ENCODE measurements at regions of chr17 and their contacts with region 1.

Region 1: GRCh38 chr17:28849281-28849680 is 5.5 kb upstream of the ERAL1 start:
- DNase-seq: peak; percentile 60
- H3K4me3 Mint-ChIP-seq: no peak overlapping the region
- H3K27ac Mint-ChIP-seq: no peak overlapping the region
- H3K4me1 Mint-ChIP-seq: no peaks in the 10 kb centered on the region
- H3K27me3 Mint-ChIP-seq: no peaks in the 10 kb centered on the region

Region 2: DNA sequence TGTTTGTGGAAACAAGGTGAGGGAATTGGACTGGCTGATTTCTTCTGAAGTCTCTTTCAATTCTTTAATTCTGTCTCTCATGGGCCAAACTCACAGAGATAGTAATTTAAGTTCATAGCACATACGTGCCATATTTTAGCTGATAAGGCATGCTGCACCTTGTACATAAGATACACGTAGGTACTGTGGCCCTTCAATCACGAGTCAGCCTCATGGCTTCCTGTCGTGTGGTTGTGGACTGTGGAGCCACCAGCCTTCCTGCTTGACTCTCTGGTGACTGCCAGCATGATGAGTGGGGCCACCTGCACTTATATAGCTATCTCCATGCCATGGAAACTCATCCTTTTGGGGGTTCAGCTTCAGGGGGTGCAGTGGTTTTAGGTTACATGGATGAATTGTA is 1368.0 kb before region 1 on chr17:
- CTCF ChIA-PET with region 1: no interaction called
- intact Hi-C with region 1: no loop called
- DNase-seq: peak; percentile 73
- H3K4me3 Mint-ChIP-seq: peak overlapping the region; percentile 32
- H3K27ac Mint-ChIP-seq: peak overlapping the region; percentile 28
- H3K4me1 Mint-ChIP-seq: peaks cover 66% of the 10 kb centered on the region
- H3K27me3 Mint-ChIP-seq: no peaks in the 10 kb centered on the region

Region 3: DNA sequence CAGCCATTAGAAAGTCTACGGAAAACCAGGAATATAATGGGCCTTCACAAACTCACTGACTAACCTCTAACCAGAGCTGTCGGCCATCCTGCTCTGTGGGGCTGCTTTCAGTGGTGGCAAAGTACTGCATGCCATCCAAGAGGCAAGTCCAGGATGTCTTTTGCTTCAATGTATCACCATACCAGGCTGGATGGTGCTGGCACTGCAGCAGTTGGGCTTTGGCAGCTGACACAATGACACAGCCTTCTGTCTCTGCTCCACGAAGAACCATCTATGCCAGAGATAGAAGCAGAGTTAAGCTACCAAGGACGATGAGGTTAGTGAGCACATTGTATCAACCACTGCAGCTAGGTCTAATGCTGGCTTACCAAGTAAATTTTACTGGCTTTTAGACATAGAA is 225.6 kb before region 1 on chr17:
- CTCF ChIA-PET with region 1: no interaction called
- intact Hi-C with region 1: no loop called
- DNase-seq: no peak
- H3K4me3 Mint-ChIP-seq: no peak overlapping the region
- H3K27ac Mint-ChIP-seq: no peak overlapping the region
- H3K4me1 Mint-ChIP-seq: peaks cover 7% of the 10 kb centered on the region
- H3K27me3 Mint-ChIP-seq: no peaks in the 10 kb centered on the region

Region 4: GRCh38 chr17:28861393-28862203 is 12.3 kb after region 1 on chr17:
- CTCF ChIA-PET with region 1: interaction called, 39 read pairs
- intact Hi-C with region 1: no loop called
- DNase-seq: no peak
- H3K4me3 Mint-ChIP-seq: no peak overlapping the region
- H3K27ac Mint-ChIP-seq: no peak overlapping the region
- H3K4me1 Mint-ChIP-seq: peaks cover 17% of the 10 kb centered on the region
- H3K27me3 Mint-ChIP-seq: no peaks in the 10 kb centered on the region

Region 5: DNA sequence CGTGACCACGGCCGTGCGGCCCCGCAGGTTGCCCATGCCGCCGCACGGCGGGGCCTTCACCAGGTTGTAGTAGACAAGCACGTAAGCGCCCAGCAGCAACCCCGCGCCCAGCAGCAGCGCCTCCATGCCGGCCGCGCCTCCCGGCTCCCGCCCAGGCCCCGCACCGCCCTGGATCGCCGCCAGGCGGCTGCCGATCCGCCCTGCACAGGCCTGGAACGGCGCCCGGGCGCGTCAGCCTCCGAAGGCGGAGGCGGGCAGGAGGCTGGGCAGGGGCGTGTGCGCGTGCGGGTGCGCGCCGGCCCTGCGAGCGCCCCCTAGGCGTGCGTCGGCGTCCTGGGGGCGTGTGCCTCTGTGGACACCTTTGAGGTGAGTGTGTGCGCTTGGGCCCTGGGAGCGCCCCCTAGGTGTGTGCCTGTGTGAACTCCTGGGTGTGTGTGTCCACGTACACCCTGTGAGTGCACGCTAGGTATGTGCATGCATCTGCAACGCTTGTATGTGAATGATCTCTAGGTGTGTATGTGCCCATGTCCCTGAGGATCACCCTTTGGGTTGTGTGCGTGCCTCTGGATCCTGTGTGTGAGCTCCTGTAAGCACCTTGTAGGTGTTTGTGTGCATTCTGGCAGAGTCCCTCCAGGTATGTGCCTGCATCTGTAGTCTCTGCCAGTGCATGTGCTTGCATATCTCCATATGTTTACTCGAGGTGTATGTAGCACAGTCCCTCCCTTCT is 53.7 kb after region 1 on chr17 and contains the start of gene DHRS13:
- CTCF ChIA-PET with region 1: interaction called, 22 read pairs
- intact Hi-C with region 1: loop called (anchors 1 kb)
- DNase-seq: peak; percentile 93
- H3K4me3 Mint-ChIP-seq: peak within 1 kb of the TSS; percentile 98
- H3K27ac Mint-ChIP-seq: peak within 1 kb of the TSS; percentile 88
- H3K4me1 Mint-ChIP-seq: peaks cover 35% of the 10 kb centered on the region
- H3K27me3 Mint-ChIP-seq: no peaks in the 10 kb centered on the region
- total RNA-seq, gene DHRS13: 20.1 to 20.9 TPM

Region 6: DNA sequence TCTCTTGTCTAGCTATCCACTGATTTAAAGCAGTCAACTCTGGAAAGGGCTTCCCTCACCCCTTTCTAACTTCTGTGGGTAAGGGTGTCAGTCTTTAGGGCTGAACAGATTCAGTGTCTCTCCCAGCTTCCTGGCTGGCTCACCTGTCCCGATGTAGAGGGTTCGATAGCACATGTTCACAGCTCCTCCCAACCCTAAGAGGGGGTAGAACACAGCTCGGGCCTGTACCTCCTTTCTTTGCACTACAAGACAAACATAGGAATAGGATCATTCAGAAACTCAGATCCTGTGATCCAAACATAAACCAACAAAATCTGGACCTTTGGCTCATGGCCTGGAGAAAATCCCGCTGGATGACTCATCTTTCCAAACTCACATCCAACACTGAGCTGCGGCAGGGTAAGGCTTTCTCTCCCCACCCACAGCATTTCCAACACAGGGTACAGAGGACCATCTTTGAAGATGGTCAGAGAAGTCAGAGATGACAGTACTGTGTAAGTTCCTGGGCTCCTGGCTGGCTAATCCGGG is 59.4 kb after region 1 on chr17:
- CTCF ChIA-PET with region 1: interaction called, 22 read pairs
- intact Hi-C with region 1: loop called (anchors 1 kb)
- DNase-seq: no peak
- H3K4me3 Mint-ChIP-seq: no peak overlapping the region
- H3K27ac Mint-ChIP-seq: peak overlapping the region; percentile 26
- H3K4me1 Mint-ChIP-seq: no peaks in the 10 kb centered on the region
- H3K27me3 Mint-ChIP-seq: no peaks in the 10 kb centered on the region

Region 7: DNA sequence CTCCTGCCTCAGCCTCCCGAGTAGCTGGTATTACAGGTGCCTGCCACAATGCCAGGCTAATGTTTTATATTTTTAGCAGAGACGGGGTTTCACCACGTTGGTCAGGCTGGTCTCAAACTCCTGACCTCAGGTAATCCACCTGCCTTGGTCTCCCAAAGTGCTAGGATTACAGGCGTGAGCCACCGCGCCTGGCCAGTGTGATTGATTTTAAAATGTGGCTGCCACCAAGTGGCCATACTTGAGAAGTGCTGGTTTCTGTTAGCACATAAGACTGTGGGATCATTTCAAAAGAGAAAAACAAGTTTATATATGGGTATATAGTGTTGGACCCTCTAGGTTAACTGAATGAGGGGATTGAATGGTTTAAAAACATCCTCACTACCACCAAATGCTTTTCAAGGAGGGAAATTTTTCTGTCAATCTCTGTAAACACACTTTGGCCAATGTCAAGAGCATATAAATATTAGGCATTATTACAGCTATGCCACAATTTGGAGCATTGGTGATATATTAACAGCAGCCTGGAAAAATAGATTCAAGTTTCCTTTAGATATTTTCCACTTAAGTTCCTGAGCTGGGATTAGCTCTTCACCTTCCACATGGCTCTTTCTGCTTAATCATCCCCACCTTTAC is 67.1 kb after region 1 on chr17:
- CTCF ChIA-PET with region 1: interaction called, 4 read pairs
- intact Hi-C with region 1: loop called (anchors 1 kb)
- DNase-seq: peak; percentile 62
- H3K4me3 Mint-ChIP-seq: no peak overlapping the region
- H3K27ac Mint-ChIP-seq: peak overlapping the region; percentile 34
- H3K4me1 Mint-ChIP-seq: peaks cover 13% of the 10 kb centered on the region
- H3K27me3 Mint-ChIP-seq: no peaks in the 10 kb centered on the region